ENCODE measurements at regions of chr20 and their contacts with region 1.

Region 1: GRCh38 chr20:49812463-49813304 is at the start of gene SLC9A8:
- DNase-seq: peak; percentile 94
- H3K4me3 Mint-ChIP-seq: peak within 1 kb of the TSS; percentile 92
- H3K27ac Mint-ChIP-seq: peak within 1 kb of the TSS; percentile 96
- H3K4me1 Mint-ChIP-seq: peaks cover 41% of the 10 kb centered on the region
- H3K27me3 Mint-ChIP-seq: no peaks in the 10 kb centered on the region
- total RNA-seq, gene SLC9A8: 15.2 and 15.7 TPM in 2 replicates

Region 2: DNA sequence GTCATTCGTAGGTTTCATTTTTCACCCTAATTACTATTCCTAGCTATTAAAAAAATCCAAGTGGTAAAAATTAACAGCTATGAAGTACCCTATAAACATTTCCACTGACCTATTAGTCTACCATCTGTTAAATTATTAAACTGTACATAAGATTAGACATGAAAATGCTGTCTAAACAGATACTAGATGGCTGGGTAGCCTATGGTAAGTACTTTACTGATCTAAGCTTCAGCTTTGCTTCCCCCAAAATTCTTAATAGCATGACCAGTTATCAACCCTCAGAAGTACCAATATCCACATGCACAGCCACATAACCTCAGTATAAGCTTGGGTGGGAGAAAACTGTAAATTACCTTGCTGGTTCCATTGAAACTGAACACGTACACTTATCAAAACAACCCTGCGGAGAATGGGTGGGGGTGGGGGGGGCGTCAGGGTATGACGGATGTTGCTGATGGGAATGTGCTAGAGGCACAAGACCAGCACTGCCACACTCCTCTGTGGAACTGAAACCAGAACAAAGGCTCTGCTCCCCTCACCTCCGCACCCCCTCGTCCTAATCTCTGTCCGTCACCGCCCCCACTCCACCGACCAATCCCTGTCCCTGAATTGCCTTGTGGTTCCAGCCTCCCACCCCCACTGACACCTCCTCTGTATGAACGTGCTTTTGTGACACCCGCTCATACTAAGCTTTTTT is 144.4 kb before region 1 on chr20:
- intact Hi-C with region 1: loop called (anchors 5 kb)
- DNase-seq: peak; percentile 72
- H3K4me3 Mint-ChIP-seq: no peak overlapping the region
- H3K27ac Mint-ChIP-seq: peak overlapping the region; percentile 70
- H3K4me1 Mint-ChIP-seq: peaks cover 53% of the 10 kb centered on the region
- H3K27me3 Mint-ChIP-seq: peaks cover 3% of the 10 kb centered on the region

Region 3: GRCh38 chr20:49676581-49677291 is 135.9 kb before region 1 on chr20:
- intact Hi-C with region 1: loop called (anchors 5 kb)
- DNase-seq: peak; percentile 84
- H3K4me3 Mint-ChIP-seq: peak overlapping the region; percentile 60
- H3K27ac Mint-ChIP-seq: peak overlapping the region; percentile 84
- H3K4me1 Mint-ChIP-seq: peaks cover 69% of the 10 kb centered on the region
- H3K27me3 Mint-ChIP-seq: no peaks in the 10 kb centered on the region

Region 4: GRCh38 chr20:49713753-49714712 is 98.7 kb before region 1 on chr20 and contains the start of gene B4GALT5:
- intact Hi-C with region 1: loop called (anchors 2 kb)
- DNase-seq: peak; percentile 92
- H3K4me3 Mint-ChIP-seq: peak within 1 kb of the TSS; percentile 94
- H3K27ac Mint-ChIP-seq: peak within 1 kb of the TSS; percentile 91
- H3K4me1 Mint-ChIP-seq: peaks cover 30% of the 10 kb centered on the region
- H3K27me3 Mint-ChIP-seq: no peaks in the 10 kb centered on the region
- total RNA-seq, gene B4GALT5: 39.0 and 39.1 TPM in 2 replicates

Region 5: GRCh38 chr20:49775229-49775693 is 37.4 kb before region 1 on chr20:
- intact Hi-C with region 1: loop called (anchors 2 kb)
- DNase-seq: no peak
- H3K4me3 Mint-ChIP-seq: no peak overlapping the region
- H3K27ac Mint-ChIP-seq: no peak overlapping the region
- H3K4me1 Mint-ChIP-seq: peaks cover 30% of the 10 kb centered on the region
- H3K27me3 Mint-ChIP-seq: peaks cover 10% of the 10 kb centered on the region

Region 6: DNA sequence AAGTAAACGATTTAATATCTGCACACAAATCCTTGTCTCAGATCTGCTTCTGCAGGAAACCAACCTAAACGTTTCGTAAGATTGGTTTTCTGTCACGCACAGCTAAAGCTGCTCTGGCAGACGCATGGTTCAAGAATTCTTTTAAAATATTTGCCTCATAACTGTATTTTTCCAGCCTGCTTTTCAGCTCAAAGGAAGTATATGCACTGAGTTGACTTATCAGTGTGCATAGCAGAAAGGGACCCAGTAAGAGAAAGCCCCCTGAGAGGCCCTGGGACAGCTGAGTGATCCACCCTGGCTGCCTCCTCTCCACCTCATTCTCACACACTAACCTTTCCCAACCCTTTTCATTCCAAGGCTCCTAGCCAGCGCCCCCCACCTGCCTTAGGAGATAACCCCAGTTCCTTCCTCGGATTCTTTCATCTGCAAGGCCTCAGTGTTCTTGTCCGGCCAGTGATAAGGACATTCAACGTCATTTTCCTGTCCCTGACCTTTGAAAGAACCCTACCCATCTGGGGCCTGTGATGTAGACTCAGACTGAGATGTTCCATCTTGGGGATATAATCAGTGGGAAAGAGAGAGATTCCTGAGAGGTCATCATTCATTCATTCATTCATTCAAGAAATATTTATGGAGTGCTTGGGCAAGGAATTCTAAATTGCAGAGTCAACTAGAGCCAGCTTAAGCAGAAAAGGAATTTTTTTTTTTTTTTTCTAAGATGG is 22.4 kb before region 1 on chr20:
- intact Hi-C with region 1: no loop called
- DNase-seq: no peak
- H3K4me3 Mint-ChIP-seq: no peak overlapping the region
- H3K27ac Mint-ChIP-seq: no peak overlapping the region
- H3K4me1 Mint-ChIP-seq: peaks cover 18% of the 10 kb centered on the region
- H3K27me3 Mint-ChIP-seq: peaks cover 11% of the 10 kb centered on the region

Region 7: GRCh38 chr20:50115591-50116372 is 303.1 kb after region 1 on chr20:
- intact Hi-C with region 1: loop called (anchors 5 kb)
- DNase-seq: peak; percentile 97
- H3K4me3 Mint-ChIP-seq: peak overlapping the region; percentile 98
- H3K27ac Mint-ChIP-seq: peak overlapping the region; percentile 85
- H3K4me1 Mint-ChIP-seq: peaks cover 47% of the 10 kb centered on the region
- H3K27me3 Mint-ChIP-seq: no peaks in the 10 kb centered on the region

Measured in activated CD4-positive, alpha-beta T cell treated with anti-CD3 and anti-CD28 coated beads, Interleukin-2, amount 10 ng/mL, durations not matched to agents 24 days and 14 days (primary cell).